Breast epithelium (tissue), 4 donors: ENCODE measurements at regions of chr14 and their contacts with region 1.

Region 1: DNA sequence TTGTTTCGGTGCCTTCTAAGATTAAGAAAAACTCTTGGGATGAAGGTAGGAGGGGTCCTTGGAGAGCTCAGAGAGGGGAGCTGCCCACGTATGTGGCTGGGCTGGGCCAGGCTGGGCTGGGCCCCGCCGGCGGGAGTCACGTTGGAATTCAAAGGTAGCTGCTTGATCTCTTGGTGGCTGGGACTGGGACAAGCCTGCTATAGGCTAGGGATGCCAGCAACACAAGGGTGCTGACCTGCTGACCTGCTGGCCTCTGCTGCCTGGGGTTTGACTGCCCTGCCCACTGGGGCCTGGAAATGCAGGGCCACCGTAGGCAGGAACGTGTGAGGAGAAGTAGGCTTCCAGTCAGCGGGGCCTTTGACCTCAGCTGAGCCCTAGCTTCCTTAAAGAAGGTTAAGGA is 52.8 kb upstream of the GTF2A1 start:
- DNase-seq: no peak
- H3K4me3 ChIP-seq: no peak overlapping the region
- H3K27ac ChIP-seq: peak overlapping the region; percentile 4 to 42
- H3K4me1 ChIP-seq: no peaks in the 10 kb centered on the region
- H3K27me3 ChIP-seq: no peaks in the 10 kb centered on the region
- CTCF ChIP-seq: no peak
- POLR2A ChIP-seq: no peak

Region 2: GRCh38 chr14:81246461-81247145 is 26.9 kb before region 1 on chr14:
- intact Hi-C with region 1: no loop called
- DNase-seq: no peak
- H3K4me3 ChIP-seq: no peak overlapping the region
- H3K27ac ChIP-seq: peak overlapping the region in 1 of 2 donors; percentile 7
- H3K4me1 ChIP-seq: no peaks in the 10 kb centered on the region
- H3K27me3 ChIP-seq: no peaks in the 10 kb centered on the region
- CTCF ChIP-seq: no peak
- POLR2A ChIP-seq: no peak

Region 3: DNA sequence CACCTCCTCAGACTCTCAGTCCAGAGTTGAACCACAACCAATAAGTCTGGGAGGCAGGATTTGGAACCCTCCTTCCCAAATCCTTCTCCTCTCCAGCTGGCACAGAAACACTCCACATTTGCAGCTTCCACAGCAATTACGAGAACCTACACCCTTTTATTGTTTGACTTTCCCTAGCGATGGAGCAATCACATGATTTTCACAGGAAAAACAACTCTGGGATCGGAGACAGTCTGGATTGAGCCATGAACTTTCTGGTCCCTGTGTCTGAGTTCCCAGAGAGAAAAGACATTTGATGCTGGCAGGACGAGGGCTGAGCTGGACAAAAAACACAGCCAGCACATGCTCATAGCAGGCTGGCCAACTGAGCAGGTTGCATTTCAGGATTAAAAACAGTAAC is 175.6 kb after region 1 on chr14:
- intact Hi-C with region 1: loop called (anchors 5 kb)
- DNase-seq: peak in 1 of 2 donors; percentile 27
- H3K4me3 ChIP-seq: peak overlapping the region in 1 of 3 donors; percentile 42
- H3K27ac ChIP-seq: peak overlapping the region; percentile 45 to 72
- H3K4me1 ChIP-seq: no peaks in the 10 kb centered on the region
- H3K27me3 ChIP-seq: no peaks in the 10 kb centered on the region
- CTCF ChIP-seq: no peak
- POLR2A ChIP-seq: no peak